ENCODE measurements at regions of chr17 and their contacts with region 1.

Region 1: GRCh38 chr17:7844292-7845154 is 10.3 kb upstream of the TMEM88 start:
- DNase-seq: peak; percentile 92
- ATAC-seq: peak; percentile 51
- H3K4me3 Mint-ChIP-seq: peak overlapping the region; percentile 97
- H3K27ac Mint-ChIP-seq: peak overlapping the region; percentile 96
- H3K4me1 Mint-ChIP-seq: peaks cover 40% of the 10 kb centered on the region
- H3K27me3 Mint-ChIP-seq: no peaks in the 10 kb centered on the region

Region 2: DNA sequence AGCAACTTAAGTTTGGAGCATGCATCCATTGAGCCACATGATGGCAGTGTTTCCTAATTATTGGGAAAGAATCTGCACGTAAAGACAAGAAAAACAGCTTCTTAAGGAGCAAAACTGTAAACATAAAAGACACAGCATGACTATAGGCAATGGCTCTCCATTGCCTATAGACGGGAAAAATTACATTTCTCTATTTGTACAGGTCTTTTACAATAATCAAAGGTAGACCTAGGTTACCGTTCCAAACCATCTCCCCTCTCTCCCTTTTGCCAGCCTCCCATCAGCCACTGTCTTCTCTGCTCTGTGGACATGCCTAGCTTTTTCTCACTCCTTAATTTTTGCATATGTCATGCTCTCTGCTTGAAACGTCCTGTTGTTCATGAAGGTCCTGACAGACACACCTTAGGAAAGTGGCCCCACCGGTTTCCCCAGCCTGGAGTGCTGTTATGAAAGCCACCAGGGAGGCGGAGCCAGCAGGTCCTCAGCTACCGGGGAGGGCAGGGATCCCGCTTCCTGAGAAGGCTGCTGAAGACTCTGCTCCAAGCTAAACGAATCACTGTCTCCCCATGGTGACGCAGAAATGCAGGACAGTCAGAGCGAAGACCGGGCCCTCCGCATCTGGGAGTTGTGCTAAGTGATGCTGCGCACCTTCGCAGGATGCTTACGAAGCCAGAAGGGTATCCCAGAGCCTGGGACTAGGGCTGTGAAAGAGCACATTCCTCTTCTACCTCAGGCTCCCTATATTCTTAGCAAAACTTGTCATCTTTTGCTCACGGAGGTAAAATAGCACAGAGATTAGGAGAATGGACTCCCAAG is 798.4 kb before region 1 on chr17:
- CTCF ChIA-PET with region 1: no interaction called
- POLR2A ChIA-PET with region 1: no interaction called
- intact Hi-C with region 1: loop called in 1 of 2 experiments (anchors 10 kb)
- DNase-seq: peak; percentile 66
- ATAC-seq: peak; percentile 34
- H3K4me3 Mint-ChIP-seq: peak overlapping the region; percentile 68
- H3K27ac Mint-ChIP-seq: peak overlapping the region; percentile 59
- H3K4me1 Mint-ChIP-seq: peaks cover 37% of the 10 kb centered on the region
- H3K27me3 Mint-ChIP-seq: peaks cover 3% of the 10 kb centered on the region

Region 3: DNA sequence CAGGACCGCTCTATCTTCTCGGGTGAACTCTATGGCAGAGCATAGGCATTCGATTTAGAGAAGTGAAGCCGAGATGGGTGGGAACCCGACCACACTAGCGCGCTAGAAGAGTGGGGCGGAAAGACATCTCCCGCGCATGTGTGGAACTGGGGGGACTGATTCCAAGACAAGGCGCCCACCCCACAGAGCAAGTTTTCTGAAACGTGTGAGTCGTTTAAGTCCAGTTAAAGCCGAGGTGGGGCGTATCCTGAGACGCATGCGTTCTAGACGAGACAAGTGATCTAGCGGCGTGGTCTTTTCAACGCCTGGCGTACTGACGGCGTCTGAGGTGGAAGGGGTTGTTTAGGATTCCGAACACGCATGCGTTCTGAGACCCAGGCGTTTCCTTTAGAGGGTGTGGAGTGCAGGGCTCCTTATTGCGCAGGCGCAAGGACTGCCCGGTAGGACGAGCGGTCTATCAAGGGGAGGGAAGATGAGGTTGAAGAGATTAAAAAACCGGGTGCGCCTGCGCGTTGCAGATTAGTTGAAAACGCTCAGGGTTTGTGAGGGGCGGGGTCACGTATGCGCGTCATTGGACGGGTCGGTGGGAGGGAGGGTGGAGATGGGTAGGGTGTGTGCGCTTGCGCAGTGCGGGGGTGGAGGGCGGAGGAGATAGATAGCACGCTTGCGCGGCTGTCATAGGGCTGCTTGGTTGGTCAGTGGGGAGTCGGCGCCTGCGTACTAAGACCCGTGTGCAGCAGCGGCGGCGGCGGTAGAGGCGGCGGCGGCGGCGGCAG is 537.4 kb before region 1 on chr17 and contains the start of gene EIF5A:
- CTCF ChIA-PET with region 1: no interaction called
- POLR2A ChIA-PET with region 1: no interaction called
- intact Hi-C with region 1: loop called (anchors 2 kb)
- DNase-seq: peak; percentile 100
- ATAC-seq: peak; percentile 86
- H3K4me3 Mint-ChIP-seq: peak within 1 kb of the TSS; percentile 96
- H3K27ac Mint-ChIP-seq: peak within 1 kb of the TSS; percentile 100
- H3K4me1 Mint-ChIP-seq: peaks cover 36% of the 10 kb centered on the region
- H3K27me3 Mint-ChIP-seq: no peaks in the 10 kb centered on the region
- total RNA-seq, gene EIF5A: 780 to 934 TPM

Region 4: DNA sequence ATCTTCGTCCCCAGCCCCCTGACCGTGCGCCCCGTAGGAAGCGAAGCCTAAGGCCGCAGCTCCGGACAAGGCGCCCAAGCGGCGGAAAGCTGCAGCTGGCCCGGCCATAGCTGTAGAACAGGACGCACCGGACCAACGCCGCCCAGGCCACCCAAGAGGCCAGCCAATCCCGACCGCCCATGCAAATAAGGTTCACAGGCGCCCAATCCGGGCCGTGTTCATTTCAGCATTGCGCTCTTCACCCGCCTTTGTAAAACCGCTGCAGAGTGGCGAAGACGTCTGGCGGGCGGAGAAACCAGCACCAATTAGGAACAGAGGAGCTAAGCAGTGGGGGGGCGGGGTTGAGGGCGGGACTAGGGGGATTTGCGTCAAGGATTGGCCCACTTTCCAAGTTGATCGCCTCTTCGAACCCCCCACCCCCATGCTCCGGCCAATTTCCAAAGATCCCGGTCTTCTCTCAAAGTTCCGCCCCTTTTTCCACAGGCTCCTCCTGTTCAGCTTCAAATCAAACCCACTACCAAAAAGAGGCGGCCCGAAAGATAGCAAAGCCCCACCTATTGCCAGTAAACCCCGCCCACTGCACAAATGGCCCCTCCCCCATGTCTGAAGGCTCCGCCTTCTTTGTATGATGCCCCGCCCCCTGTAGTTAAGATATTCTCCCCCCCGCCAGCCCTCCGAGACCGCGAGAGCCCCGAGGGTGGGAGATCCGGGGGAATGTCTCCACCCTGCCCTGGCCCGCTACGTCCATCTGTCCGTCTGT is 440.4 kb before region 1 on chr17 and contains the start of gene TMEM256:
- CTCF ChIA-PET with region 1: no interaction called
- POLR2A ChIA-PET with region 1: no interaction called
- intact Hi-C with region 1: loop called in 1 of 2 experiments (anchors 5 kb)
- DNase-seq: peak; percentile 99
- ATAC-seq: peak; percentile 94
- H3K4me3 Mint-ChIP-seq: peak within 1 kb of the TSS; percentile 89
- H3K27ac Mint-ChIP-seq: peak within 1 kb of the TSS; percentile 92
- H3K4me1 Mint-ChIP-seq: peaks cover 16% of the 10 kb centered on the region
- H3K27me3 Mint-ChIP-seq: peaks cover 2% of the 10 kb centered on the region
- total RNA-seq, gene TMEM256: 55.8 to 58.1 TPM

Region 5: GRCh38 chr17:7856883-7857723 is 12.6 kb after region 1 on chr17 and contains the start of gene NAA38:
- CTCF ChIA-PET with region 1: interaction called, 10 read pairs
- POLR2A ChIA-PET with region 1: interaction called, 6 read pairs
- intact Hi-C with region 1: loop called (anchors 1 kb)
- DNase-seq: peak; percentile 97
- ATAC-seq: peak; percentile 91
- H3K4me3 Mint-ChIP-seq: no peak within 1 kb of the TSS
- H3K27ac Mint-ChIP-seq: no peak within 1 kb of the TSS
- H3K4me1 Mint-ChIP-seq: peaks cover 18% of the 10 kb centered on the region
- H3K27me3 Mint-ChIP-seq: no peaks in the 10 kb centered on the region
- total RNA-seq, gene NAA38: 64.7 to 79.8 TPM

Region 6: DNA sequence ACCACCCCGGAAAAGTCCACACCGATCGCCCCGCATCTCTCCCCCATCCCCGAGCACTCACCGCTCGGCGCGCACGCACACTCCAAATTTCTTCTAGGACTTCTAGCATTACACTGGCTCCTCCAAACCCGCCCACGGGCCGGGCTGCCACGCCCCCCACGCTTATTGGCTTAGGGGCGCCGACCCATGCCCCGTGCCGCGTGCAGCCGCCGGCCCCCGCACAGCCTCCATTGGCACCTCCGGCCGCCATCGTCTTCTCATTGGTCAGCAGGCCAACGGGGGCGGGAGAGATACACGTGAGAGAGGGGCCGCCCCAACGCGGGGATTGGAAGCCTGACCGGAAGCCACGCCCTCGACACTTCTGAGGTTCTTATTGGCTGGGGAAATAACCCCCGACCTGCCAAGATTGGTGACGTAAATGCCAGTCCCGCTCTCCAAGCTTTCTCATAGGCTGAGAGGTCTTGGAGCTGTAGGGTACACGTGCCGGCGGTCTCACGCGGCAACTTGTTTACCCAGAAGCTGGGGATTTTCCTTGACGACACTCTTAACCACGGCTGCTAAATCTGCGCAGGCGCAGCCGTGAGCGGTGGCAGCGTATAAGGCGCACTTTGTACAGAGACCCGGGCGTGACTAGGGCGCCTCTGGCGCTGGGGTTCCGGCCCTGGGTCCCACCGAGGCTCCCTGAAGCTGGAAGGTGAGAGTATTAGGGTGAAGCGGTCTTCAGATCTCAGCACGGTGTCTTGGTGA is 311.9 kb after region 1 on chr17:
- CTCF ChIA-PET with region 1: no interaction called
- POLR2A ChIA-PET with region 1: no interaction called
- intact Hi-C with region 1: loop called in 1 of 2 experiments (anchors 2 kb)
- DNase-seq: peak; percentile 100
- ATAC-seq: peak; percentile 75
- H3K4me3 Mint-ChIP-seq: no peak overlapping the region
- H3K27ac Mint-ChIP-seq: no peak overlapping the region
- H3K4me1 Mint-ChIP-seq: peaks cover 49% of the 10 kb centered on the region
- H3K27me3 Mint-ChIP-seq: no peaks in the 10 kb centered on the region

Region 7: DNA sequence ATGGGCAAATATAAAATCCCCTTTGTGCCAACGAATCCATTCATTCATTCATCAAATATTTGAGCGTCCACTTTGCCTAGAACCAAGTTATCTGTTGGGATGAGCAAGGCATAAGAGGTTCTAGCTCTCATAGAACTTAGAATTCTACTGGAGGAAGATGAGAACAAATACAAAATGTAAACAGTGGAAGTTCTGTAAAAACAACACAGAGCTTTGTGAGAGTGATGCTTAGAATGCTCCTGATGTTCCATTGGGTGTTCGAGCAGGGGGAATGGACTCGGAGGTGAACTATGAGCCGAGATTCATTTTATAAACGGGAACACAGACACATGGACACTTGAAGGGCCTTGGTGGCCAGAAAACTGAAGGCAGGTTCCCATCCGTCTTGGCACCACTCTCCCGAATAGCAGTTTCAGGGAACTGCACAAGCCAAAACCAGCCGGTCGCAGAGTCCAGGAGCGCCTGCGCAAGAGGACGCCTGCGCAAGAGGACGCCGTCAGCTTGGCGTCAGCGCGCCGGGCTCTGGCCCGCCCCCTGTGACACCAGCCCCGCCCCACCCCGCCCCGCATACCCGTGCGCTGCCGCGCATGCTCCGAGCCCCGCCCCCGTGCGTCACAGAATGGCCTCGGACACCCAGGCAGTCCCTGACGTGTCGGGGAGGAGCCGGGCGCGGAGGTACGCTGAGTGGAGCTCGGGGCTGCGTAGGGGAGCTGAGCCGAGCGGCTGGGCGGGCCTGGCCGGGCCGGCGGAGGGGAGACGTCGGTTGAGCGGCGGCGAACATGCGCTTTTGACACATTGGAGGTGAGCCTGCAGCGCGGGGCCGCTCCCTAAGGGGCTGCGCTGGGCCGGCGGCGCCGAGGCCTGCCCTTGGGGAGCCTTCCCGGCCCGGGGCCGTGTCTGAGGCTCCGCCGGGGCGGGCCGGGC is 591.0 kb after region 1 on chr17 and contains the start of gene NDEL1:
- CTCF ChIA-PET with region 1: no interaction called
- POLR2A ChIA-PET with region 1: no interaction called
- intact Hi-C with region 1: loop called in 1 of 2 experiments (anchors 5 kb)
- DNase-seq: peak; percentile 100
- ATAC-seq: peak; percentile 98
- H3K4me3 Mint-ChIP-seq: peak within 1 kb of the TSS; percentile 87
- H3K27ac Mint-ChIP-seq: peak within 1 kb of the TSS; percentile 91
- H3K4me1 Mint-ChIP-seq: peaks cover 29% of the 10 kb centered on the region
- H3K27me3 Mint-ChIP-seq: no peaks in the 10 kb centered on the region
- total RNA-seq, gene NDEL1: 51.9 to 58.6 TPM

Measured in activated CD4-positive, alpha-beta T cell treated with anti-CD3 and anti-CD28 coated beads for 36 hours (primary cell).